Activated CD4-positive, alpha-beta T cell treated with anti-CD3 and anti-CD28 coated beads, Interleukin-2, amount 10 ng/mL, durations not matched to agents 24 days and 14 days (primary cell): ENCODE measurements at regions of chr12 and their contacts with region 1.

Region 1: GRCh38 chr12:111685744-111686517 is at the starts of genes ACAD10 and BRAP:
- DNase-seq: peak; percentile 99
- H3K4me3 Mint-ChIP-seq: peak within 1 kb of the TSS; percentile 99
- H3K27ac Mint-ChIP-seq: peak within 1 kb of the TSS; percentile 96
- H3K4me1 Mint-ChIP-seq: peaks cover 28% of the 10 kb centered on the region
- H3K27me3 Mint-ChIP-seq: no peaks in the 10 kb centered on the region
- total RNA-seq, gene ACAD10: 28.2 and 28.6 TPM in 2 replicates
- total RNA-seq, gene BRAP: 20.3 TPM in 2 replicates

Region 2: GRCh38 chr12:111599459-111600204 is 86.3 kb before region 1 on chr12:
- intact Hi-C with region 1: loop called (anchors 2 kb)
- DNase-seq: peak; percentile 95
- H3K4me3 Mint-ChIP-seq: peak overlapping the region; percentile 78
- H3K27ac Mint-ChIP-seq: peak overlapping the region; percentile 72
- H3K4me1 Mint-ChIP-seq: peaks cover 17% of the 10 kb centered on the region
- H3K27me3 Mint-ChIP-seq: no peaks in the 10 kb centered on the region

Region 3: DNA sequence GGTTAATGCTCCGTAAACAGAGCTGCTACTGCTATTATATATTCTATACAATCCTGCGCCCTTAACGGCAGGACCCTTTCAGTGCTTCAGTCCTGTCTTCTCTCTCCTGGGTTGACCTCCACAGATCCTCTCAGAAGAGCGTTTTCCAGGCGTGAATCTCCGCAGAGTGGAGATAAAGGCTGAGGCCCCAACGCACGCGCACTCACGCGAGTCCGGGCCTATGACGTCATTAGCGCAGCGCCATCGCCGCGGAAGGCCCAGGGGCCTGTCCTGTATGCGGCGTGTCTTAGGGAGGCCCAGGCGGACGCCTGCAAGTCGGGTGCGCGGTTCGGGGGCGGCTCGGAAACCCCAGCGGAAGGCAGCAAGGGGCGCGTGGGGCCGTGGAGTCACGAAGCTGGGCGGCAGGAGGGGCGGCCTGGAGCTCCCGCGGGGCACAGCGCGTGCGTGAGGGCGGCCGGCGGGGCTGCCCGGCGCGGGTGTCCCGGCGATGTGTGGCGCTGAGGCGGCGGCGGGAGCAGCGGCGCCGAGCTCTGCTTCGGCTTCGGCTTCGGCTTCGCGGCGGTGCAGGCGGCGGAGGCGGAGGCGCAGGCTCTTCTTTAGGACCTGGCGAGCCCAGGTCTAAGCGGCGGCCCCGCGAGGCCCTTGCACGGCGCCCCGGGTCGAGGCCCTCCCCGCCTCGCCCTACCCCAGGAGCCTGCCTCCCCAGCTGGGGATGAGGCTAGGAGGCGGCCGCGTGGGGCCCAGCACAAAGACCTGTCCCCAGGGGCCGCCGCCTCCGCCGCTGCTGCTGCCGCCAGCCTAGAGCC is 156.0 kb after region 1 on chr12 and contains the start of gene MAPKAPK5:
- intact Hi-C with region 1: loop called (anchors 1 kb)
- DNase-seq: peak; percentile 99
- H3K4me3 Mint-ChIP-seq: peak within 1 kb of the TSS; percentile 98
- H3K27ac Mint-ChIP-seq: peak within 1 kb of the TSS; percentile 98
- H3K4me1 Mint-ChIP-seq: peaks cover 40% of the 10 kb centered on the region
- H3K27me3 Mint-ChIP-seq: peaks cover 2% of the 10 kb centered on the region
- total RNA-seq, gene MAPKAPK5: 76.0 and 80.2 TPM in 2 replicates